Activated T-helper 1 cell treated with anti-CD3 and anti-CD28 coated beads, Interleukin-12 subunit alpha, Interleukin-12 subunit beta, Interleukin-2, Interleukin-4 antibody, amounts not matched to agents 30 ng/mL and 10 ng/mL and 1 ng/mL, durations not matched to agents 14 hours and 24 hours and 36 hours (primary cell): ENCODE measurements at regions of chr1 and their contacts with region 1.

Region 1: DNA sequence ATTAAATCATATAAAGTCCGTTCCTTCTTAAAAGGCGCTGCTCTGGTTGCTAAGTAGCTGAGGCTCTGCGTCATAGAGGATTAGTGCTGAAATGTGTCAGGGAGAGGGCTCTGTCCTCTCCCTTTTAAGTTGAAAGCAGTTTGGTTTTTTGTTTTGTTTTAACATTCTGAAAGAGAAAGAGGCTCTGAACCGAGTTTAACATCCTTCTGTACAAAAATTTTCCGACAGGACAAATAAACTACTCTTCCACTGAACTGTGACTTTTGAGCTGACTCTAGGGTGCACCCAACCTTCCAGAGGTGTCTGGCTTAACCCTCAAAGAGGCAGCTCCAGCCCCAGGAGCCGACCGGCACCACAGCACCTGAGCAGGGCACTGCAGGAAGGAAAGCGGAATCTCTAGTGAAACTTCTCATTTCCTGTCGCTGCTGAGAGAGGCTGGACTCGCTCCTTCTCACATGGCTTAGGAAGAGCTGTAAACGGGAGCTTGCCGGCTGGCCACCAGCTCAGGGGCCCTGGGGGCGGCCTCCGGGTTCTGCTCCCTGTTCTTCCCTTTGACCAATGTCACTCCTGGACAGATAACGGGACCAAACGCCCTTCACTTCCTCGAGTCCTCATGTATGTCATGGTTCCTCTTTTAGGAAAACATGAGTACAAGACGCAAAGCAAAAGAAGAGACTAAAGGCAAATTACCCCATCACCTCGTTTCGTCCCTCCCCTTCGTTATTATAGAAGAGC is 1.2 kb downstream of the VAV3 start:
- DNase-seq: peak; percentile 31
- H3K4me3 Mint-ChIP-seq: peak overlapping the region; percentile 90
- H3K27ac Mint-ChIP-seq: peak overlapping the region; percentile 84
- H3K4me1 Mint-ChIP-seq: peaks cover 28% of the 10 kb centered on the region
- H3K27me3 Mint-ChIP-seq: peaks cover 6% of the 10 kb centered on the region

Region 2: GRCh38 chr1:107782217-107782845 is 181.4 kb before region 1 on chr1:
- intact Hi-C with region 1: loop called (anchors 1 kb)
- DNase-seq: peak; percentile 16
- H3K4me3 Mint-ChIP-seq: no peak overlapping the region
- H3K27ac Mint-ChIP-seq: no peak overlapping the region
- H3K4me1 Mint-ChIP-seq: peaks cover 21% of the 10 kb centered on the region
- H3K27me3 Mint-ChIP-seq: no peaks in the 10 kb centered on the region

Region 3: DNA sequence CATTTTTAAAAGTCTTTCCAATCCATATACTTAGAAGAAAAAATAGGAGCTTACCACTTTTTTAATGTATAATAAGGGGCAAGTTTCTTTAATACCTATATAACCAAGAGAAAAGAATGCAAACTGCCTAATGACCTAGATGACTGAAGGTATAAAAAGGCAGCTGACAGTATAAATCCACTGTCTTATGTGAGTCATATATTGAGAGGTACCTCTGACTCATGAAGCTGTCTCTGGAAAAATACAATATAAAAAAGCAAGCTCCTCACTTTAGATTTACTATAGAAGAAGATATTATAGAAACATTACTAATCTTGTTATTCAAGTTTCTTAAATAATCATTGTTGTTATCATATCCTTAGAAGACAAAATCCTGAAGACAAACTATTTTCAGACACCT is 143.0 kb before region 1 on chr1:
- intact Hi-C with region 1: loop called (anchors 2 kb)
- DNase-seq: no peak
- H3K4me3 Mint-ChIP-seq: no peak overlapping the region
- H3K27ac Mint-ChIP-seq: no peak overlapping the region
- H3K4me1 Mint-ChIP-seq: peaks cover 16% of the 10 kb centered on the region
- H3K27me3 Mint-ChIP-seq: peaks cover 6% of the 10 kb centered on the region

Region 4: DNA sequence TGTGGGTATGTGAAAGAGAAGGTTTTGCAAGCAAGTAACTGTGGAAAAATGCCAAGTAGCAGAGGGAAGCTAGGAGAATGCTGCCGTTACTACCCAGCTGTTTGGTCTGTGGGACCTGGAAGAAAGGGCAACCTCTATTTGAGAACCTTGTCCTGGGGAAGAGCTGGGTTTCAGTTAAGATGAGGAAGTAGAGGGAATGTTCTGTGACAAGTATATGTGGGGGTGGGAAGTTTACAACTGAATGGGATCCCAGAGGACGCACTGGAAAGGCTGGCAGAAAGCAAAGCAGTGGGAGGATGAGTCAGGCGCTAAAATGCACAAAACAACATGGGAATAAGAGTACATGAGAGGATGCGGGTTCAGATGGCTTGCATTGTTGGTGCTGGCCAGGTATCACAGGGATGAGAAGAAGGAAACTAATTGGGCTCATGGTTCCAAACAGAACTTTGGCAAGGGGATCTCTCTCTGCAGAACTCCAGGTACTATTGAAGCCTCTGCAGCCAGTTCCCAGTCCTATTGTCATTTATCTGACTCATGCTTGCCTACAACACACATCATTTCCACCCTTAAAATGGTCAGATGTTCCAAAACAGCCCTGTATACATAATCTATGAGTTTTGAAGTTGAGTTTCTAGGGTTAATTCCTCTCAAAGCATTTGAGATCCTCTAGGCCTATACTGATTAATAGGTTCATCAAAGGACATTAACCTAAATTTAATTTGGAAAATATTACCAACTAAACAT is 89.7 kb after region 1 on chr1:
- intact Hi-C with region 1: loop called (anchors 2 kb)
- DNase-seq: no peak
- H3K4me3 Mint-ChIP-seq: no peak overlapping the region
- H3K27ac Mint-ChIP-seq: no peak overlapping the region
- H3K4me1 Mint-ChIP-seq: peaks cover 6% of the 10 kb centered on the region
- H3K27me3 Mint-ChIP-seq: no peaks in the 10 kb centered on the region

Region 5: DNA sequence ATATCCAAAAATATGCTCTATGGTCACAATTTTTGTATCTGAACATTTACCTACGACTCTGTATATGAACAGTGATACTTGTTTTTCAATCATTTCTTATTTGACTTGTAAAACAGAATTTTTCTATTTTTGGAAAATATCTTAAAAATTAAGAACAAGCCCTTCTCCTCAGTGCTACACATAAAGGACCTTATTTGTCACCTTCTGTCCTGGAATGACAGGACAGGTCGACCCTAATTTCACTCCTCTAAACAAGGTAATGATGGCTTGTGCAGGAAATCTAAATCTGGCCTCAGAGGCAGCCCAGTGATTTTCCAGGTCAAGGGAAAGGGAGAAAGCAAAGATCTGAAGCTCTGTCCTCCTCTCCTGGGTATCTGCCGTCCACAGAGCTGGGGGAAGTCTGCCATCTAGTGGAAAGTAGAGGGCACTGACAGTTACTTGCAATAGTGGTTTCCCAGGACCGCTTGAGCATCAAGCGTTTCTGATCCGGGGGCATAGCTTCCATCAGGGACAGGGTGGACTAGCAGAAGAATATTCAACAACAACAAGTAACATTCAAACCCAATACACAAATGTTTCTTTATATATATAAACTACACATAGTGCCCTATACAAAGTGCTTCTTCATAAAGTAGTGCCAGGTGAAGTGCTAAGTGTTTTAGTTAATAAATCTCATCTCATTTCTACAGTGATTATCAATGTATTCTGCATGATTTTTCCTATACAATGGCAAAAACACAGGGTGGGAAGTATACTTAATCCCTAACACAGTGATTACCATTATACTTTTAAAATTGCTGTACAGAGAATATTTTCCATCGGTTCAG is 161.8 kb after region 1 on chr1:
- intact Hi-C with region 1: loop called (anchors 1 kb)
- DNase-seq: peak; percentile 40
- H3K4me3 Mint-ChIP-seq: no peak overlapping the region
- H3K27ac Mint-ChIP-seq: no peak overlapping the region
- H3K4me1 Mint-ChIP-seq: no peaks in the 10 kb centered on the region
- H3K27me3 Mint-ChIP-seq: peaks cover 3% of the 10 kb centered on the region